GM23248 (cell line): ENCODE measurements at regions of chr6 and their contacts with region 1.

Region 1: DNA sequence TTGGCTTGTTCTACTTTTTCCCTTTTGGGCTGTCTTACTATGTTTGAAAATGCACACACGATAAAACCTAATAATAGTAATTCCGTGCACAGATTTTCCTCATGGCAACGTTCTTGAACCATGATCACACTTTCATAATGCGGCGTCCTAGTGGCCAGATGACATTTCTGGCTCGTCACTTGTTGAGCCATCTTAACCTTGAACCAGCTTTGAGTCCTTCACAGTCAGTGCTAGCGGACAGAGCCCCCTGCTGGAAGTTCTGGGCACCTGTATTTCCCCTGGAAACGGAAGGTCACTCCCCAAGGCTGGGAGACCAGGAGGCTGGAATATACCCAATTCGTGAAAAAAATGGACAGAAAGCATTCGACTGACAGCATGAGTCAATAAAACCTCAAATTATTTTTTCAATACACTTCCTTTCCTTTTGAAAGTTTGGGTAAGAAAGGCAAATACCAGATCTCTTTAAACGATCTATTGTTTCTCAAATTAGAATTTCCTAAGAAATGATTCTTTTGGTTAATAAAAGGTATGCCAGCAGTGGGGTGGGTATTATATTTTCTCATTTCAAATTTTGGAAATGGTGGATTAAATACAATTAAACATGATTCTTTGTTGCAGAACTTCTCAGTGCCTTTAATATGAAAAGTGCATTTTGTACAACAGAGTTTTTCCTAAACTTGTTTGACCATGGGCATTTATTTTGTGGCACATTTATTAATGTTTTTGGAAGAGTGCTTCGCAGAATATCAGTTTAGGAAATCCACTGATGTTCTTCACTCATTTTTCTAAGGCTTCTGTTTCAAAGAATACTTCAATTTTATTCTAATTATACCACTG is 542.3 kb downstream of the QKI start:
- DNase-seq: peak; percentile 82
- H3K4me3 ChIP-seq: peak overlapping the region; percentile 54
- H3K27ac ChIP-seq: no peak overlapping the region
- H3K4me1 ChIP-seq: peaks cover 4% of the 10 kb centered on the region; the same call in 1 of the 2 replicates
- H3K27me3 ChIP-seq: peaks cover 3% of the 10 kb centered on the region; the same call in 1 of the 2 replicates

Region 2: GRCh38 chr6:162721404-162721687 is 1235.4 kb before region 1 on chr6:
- in situ Hi-C with region 1: no loop called
- DNase-seq: no peak
- H3K4me3 ChIP-seq: no peak overlapping the region
- H3K27ac ChIP-seq: no peak overlapping the region
- H3K4me1 ChIP-seq: no peaks in the 10 kb centered on the region
- H3K27me3 ChIP-seq: no peaks in the 10 kb centered on the region

Region 3: GRCh38 chr6:162856885-162857284 is 1099.9 kb before region 1 on chr6:
- in situ Hi-C with region 1: loop called (anchors 25 kb)
- DNase-seq: peak; percentile 85
- H3K4me3 ChIP-seq: peak overlapping the region; percentile 65
- H3K27ac ChIP-seq: no peak overlapping the region
- H3K4me1 ChIP-seq: peaks cover 3% of the 10 kb centered on the region; the same call in 1 of the 2 replicates
- H3K27me3 ChIP-seq: no peaks in the 10 kb centered on the region

Region 4: GRCh38 chr6:163180874-163181541 is 775.8 kb before region 1 on chr6:
- in situ Hi-C with region 1: loop called (anchors 25 kb)
- DNase-seq: peak; percentile 68
- H3K4me3 ChIP-seq: no peak overlapping the region; the same call in 1 of the 2 replicates
- H3K27ac ChIP-seq: no peak overlapping the region
- H3K4me1 ChIP-seq: no peaks in the 10 kb centered on the region
- H3K27me3 ChIP-seq: no peaks in the 10 kb centered on the region

Region 5: GRCh38 chr6:163438940-163439335 is 517.9 kb before region 1 on chr6:
- in situ Hi-C with region 1: loop called (anchors 10 kb)
- DNase-seq: peak; percentile 28
- H3K4me3 ChIP-seq: no peak overlapping the region
- H3K27ac ChIP-seq: no peak overlapping the region
- H3K4me1 ChIP-seq: peaks cover 24% of the 10 kb centered on the region
- H3K27me3 ChIP-seq: no peaks in the 10 kb centered on the region

Region 6: DNA sequence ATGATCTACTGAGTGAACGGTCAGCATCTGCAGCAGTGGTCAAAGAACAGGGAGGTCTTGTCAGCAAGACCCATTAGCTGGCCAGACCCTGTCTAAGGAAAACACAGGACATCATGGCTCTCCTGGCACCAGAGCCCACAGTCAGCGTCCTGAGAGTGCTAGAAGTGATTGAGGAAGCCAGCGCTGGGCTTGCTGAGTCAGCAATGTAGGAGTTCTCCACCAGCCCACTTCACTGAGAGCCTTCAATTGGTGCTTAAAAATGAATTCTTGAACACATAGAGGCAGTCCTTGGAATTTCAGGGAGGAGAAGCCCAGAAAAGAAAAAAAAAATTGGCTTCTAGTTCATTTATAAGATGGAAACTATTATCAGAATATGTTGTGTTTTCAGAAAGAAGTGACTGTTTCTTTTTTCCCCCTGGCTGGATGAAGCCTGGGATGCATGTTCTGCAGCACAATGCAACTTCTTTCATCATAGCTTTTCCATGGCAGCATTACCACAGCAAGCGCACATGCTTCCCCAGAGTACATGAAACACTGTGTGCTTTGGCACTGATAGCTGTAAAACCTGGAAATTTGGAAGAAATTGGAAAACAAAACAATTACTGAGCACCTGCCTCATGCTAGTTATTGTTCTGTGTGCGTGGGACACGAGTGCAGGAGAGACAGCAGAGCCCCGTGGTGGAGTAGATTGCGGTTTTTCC is 452.7 kb after region 1 on chr6:
- in situ Hi-C with region 1: no loop called
- DNase-seq: no peak
- H3K4me3 ChIP-seq: no peak overlapping the region
- H3K27ac ChIP-seq: no peak overlapping the region
- H3K4me1 ChIP-seq: no peaks in the 10 kb centered on the region
- H3K27me3 ChIP-seq: no peaks in the 10 kb centered on the region

Region 7: DNA sequence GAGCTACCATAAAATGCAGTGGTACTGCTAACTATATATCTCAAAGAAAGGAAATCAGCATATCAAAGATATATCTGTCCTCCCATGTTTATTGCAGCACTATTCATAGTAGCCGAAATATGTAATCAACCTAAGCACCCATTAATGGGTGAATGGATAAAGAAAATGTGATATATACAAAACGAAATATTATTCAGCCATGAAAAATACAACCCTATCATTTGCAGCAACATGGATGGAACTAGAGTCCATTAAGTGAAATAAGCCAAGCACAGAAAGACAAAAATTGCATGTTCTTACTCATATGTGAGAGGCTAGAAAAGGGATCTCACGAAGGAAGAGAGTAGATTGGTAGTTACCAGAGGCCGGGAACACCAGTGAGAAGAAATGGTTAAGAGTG is 1580.1 kb after region 1 on chr6:
- in situ Hi-C with region 1: no loop called
- DNase-seq: no peak
- H3K4me3 ChIP-seq: no peak overlapping the region
- H3K27ac ChIP-seq: no peak overlapping the region
- H3K4me1 ChIP-seq: no peaks in the 10 kb centered on the region
- H3K27me3 ChIP-seq: no peaks in the 10 kb centered on the region